Caco-2 (cell line): ENCODE measurements at regions of chr17 and their contacts with region 1.

Region 1: DNA sequence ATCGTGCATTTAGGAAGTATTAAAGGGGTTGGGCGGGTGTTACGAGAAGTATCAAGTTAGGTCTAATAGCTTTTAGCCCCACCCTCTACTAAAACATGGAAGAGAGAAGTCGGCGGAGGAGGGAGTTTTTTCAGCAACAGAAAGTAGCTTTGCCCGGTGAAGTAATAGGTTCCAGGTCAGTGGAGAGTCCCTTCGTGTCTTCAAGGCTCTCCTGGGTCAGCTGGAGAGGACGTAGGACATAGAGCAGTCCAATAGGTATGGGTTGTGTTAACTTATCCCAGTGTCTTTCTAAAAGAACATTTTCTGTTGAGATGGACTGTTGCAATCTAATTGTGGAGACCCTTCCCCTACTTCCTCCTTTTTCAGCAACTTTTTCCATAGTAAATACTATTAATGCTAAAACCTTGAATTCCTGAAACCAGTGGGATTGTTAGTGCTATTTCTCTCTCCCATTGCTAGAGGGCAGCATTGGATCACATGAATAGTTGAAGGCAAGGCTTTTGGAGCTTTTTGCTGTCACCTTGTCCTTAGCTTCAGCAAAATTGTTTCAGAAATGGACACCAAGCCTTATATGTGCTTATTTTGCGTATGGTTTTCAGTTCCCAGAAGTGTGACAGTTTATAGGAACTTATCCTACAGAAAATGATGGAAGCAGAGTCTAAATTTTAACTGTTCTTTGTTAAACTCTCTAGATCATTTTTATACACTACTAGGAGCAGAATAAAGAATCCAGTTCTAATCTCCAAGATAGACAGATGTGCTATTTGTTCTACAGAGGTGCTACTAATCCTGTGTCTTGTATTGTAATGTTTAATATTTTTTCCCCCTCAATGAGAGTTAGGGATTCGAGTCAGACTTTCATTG is 38.4 kb downstream of the UTP18 start:
- DNase-seq: peak in 1 of 2 experiments; percentile 48
- H3K4me3 ChIP-seq: no peak overlapping the region
- H3K4me3 Mint-ChIP-seq: no peak overlapping the region
- H3K27ac Mint-ChIP-seq: no peak overlapping the region
- H3K4me1 ChIP-seq: no peaks in the 10 kb centered on the region
- H3K4me1 Mint-ChIP-seq: no peaks in the 10 kb centered on the region
- H3K27me3 ChIP-seq: no peaks in the 10 kb centered on the region
- H3K27me3 Mint-ChIP-seq: no peaks in the 10 kb centered on the region
- CTCF ChIP-seq: peak; percentile 75 to 78

Region 2: GRCh38 chr17:51322390-51323029 is 23.8 kb after region 1 on chr17:
- CTCF ChIA-PET with region 1: no interaction called
- POLR2A ChIA-PET with region 1: no interaction called
- intact Hi-C with region 1: loop called (anchors 1 kb)
- DNase-seq: peak in 1 of 2 experiments; percentile 23
- H3K4me3 ChIP-seq: no peak overlapping the region
- H3K4me3 Mint-ChIP-seq: no peak overlapping the region
- H3K27ac Mint-ChIP-seq: no peak overlapping the region
- H3K4me1 ChIP-seq: peaks cover 18% of the 10 kb centered on the region
- H3K4me1 Mint-ChIP-seq: peaks cover 15% of the 10 kb centered on the region
- H3K27me3 ChIP-seq: no peaks in the 10 kb centered on the region
- H3K27me3 Mint-ChIP-seq: peaks cover 7% of the 10 kb centered on the region
- CTCF ChIP-seq: peak; percentile 0 to 87

Region 3: DNA sequence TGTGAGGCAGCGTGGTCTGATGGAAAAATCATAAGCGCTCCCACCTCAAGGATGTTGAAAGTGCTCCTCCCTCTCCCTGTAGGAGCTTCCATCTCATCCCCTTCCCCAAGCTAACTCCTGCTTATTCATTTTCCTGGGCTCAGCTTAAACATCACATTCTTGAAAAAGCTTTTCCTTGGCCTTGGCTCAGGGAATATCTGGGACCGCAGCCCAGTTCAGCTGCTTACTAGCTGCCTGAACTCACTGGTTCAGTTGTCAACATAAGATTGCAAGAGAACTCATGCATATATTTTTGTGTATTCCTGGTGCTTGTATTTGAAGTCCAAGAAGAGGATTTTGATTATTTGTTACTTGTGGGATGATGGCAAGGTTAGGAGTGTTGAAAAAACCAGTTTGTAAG is 53.1 kb after region 1 on chr17:
- CTCF ChIA-PET with region 1: interaction called, 15 read pairs
- POLR2A ChIA-PET with region 1: no interaction called
- intact Hi-C with region 1: no loop called
- DNase-seq: no peak
- H3K4me3 ChIP-seq: no peak overlapping the region
- H3K4me3 Mint-ChIP-seq: no peak overlapping the region
- H3K27ac Mint-ChIP-seq: no peak overlapping the region
- H3K4me1 ChIP-seq: no peaks in the 10 kb centered on the region
- H3K4me1 Mint-ChIP-seq: no peaks in the 10 kb centered on the region
- H3K27me3 ChIP-seq: no peaks in the 10 kb centered on the region; the same call in 1 of the 2 replicates
- H3K27me3 Mint-ChIP-seq: peaks cover 21% of the 10 kb centered on the region
- CTCF ChIP-seq: no peak

Region 4: GRCh38 chr17:51461578-51462004 is 162.9 kb after region 1 on chr17:
- CTCF ChIA-PET with region 1: interaction called, 3 read pairs
- POLR2A ChIA-PET with region 1: no interaction called
- intact Hi-C with region 1: loop called (anchors 2 kb)
- DNase-seq: peak; percentile 74 to 79
- H3K4me3 ChIP-seq: no peak overlapping the region
- H3K4me3 Mint-ChIP-seq: no peak overlapping the region
- H3K27ac Mint-ChIP-seq: no peak overlapping the region
- H3K4me1 ChIP-seq: no peaks in the 10 kb centered on the region
- H3K4me1 Mint-ChIP-seq: no peaks in the 10 kb centered on the region
- H3K27me3 ChIP-seq: no peaks in the 10 kb centered on the region; the same call in 1 of the 2 replicates
- H3K27me3 Mint-ChIP-seq: peaks cover 18% of the 10 kb centered on the region
- CTCF ChIP-seq: peak; percentile 80 to 89

Region 5: DNA sequence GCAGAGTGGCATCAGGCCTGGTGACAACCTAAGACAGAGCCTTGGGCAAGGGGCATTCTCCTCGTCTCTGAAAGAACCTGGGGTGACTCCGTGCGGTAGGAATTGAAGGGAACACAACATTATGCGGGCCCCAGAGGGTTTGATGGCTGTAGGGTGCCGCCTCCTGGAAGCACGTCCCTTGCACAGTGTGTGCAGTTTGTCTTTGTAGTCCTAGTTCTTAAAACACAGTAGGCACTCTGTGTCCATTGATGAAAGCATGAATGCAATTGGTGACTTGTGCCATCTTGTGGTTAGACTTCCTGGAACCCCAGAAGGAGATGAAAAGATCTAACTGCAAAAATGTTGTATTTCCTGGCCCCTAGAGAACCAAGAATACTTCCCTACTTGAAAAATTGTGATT is 241.4 kb after region 1 on chr17:
- CTCF ChIA-PET with region 1: interaction called, 12 read pairs
- POLR2A ChIA-PET with region 1: no interaction called
- intact Hi-C with region 1: loop called (anchors 1 kb)
- DNase-seq: peak in 1 of 2 experiments; percentile 16
- H3K4me3 ChIP-seq: no peak overlapping the region
- H3K4me3 Mint-ChIP-seq: no peak overlapping the region
- H3K27ac Mint-ChIP-seq: no peak overlapping the region
- H3K4me1 ChIP-seq: no peaks in the 10 kb centered on the region
- H3K4me1 Mint-ChIP-seq: no peaks in the 10 kb centered on the region
- H3K27me3 ChIP-seq: no peaks in the 10 kb centered on the region
- H3K27me3 Mint-ChIP-seq: peaks cover 6% of the 10 kb centered on the region
- CTCF ChIP-seq: peak; percentile 16 to 28